GM12878 (cell line): ENCODE measurements at regions of chr15 and their contacts with region 1.

Region 1: DNA sequence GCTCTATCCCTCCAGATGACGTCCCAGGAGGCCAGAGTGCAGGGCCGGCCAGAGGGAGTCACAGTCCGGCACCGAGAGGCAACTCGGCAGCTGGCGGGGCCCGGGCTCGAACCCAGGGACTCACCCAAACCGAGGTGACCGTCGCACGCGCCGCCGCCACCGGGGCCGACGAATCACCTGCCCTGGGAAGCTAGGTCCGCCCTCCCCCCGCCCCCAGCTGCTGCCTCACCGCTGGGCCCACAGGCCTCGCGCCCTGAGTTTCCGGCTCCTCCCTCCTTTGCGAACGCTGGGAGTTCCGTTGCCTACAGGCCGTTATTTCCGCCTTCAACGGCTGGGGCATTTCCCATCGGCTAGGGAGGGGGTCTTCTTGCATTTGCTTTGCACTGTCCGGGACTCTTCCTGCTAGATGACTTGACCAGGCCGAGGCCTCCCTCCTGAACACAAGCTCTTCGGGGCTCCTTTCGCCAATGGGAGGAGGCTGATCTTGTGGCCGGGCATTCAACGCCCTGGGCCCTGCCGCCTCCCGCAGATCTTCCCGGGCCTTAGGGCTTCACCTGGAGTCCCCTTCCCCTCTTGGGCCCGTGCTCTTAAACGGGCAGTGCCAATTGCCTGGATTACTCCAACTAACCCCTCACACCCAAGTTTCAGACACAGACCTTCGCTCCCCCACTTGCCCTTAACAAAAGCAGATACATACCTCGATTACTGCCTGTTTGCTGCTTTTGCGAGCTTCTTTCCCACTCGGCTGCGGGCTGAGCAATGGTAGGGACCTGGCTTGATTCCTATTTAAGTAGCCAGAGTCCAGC is at the start of gene SNUPN:
- DNase-seq: peak; percentile 87
- ATAC-seq: peak; percentile 91
- H3K4me3 ChIP-seq: peak within 1 kb of the TSS; percentile 81
- H3K27ac ChIP-seq: peak within 1 kb of the TSS; percentile 98
- H3K4me1 ChIP-seq: peaks cover 6% of the 10 kb centered on the region
- H3K27me3 ChIP-seq: no peaks in the 10 kb centered on the region
- CTCF ChIP-seq: no peak
- EP300 ChIP-seq: 0 out of 4 replicates have a peak, but pooled peaks of 1 of the 2 experiments have one; percentile 37
- POLR2A ChIP-seq: peak; percentile 87
- RAD21 ChIP-seq: no peak
- polyA plus RNA-seq, gene SNUPN: 47.3 to 50.3 TPM

Region 2: GRCh38 chr15:75578948-75579920 is 46.5 kb before region 1 on chr15 and contains the start of gene PTPN9:
- CTCF ChIA-PET with region 1: interaction called, 4 read pairs
- POLR2A ChIA-PET with region 1: interaction called, 5 read pairs
- RAD21 ChIA-PET with region 1: interaction called, 5 read pairs
- SMC1A ChIA-PET with region 1: no interaction called
- in situ Hi-C with region 1: no loop called
- intact Hi-C with region 1: loop called (anchors 5 kb)
- DNase-seq: no peak
- ATAC-seq: peak; percentile 84
- H3K4me3 ChIP-seq: peak within 1 kb of the TSS; percentile 86
- H3K27ac ChIP-seq: peak within 1 kb of the TSS; percentile 79
- H3K4me1 ChIP-seq: peaks cover 3% of the 10 kb centered on the region; the same call in 1 of the 2 replicates
- H3K27me3 ChIP-seq: no peaks in the 10 kb centered on the region
- CTCF ChIP-seq: peak; percentile 23 to 46 (median 33); a peak in 5 of 6 replicates
- EP300 ChIP-seq: no peak
- POLR2A ChIP-seq: peak; percentile 76
- RAD21 ChIP-seq: no peak
- polyA plus RNA-seq, gene PTPN9: 7.8 to 8.9 TPM